Gastrocnemius medialis (tissue), 4 donors: ENCODE measurements at regions of chr1 and their contacts with region 1.

Region 1: GRCh38 chr1:160046494-160047110 is 14.8 kb upstream of the PIGM start:
- DNase-seq: peak in 1 of 2 donors; percentile 31
- ATAC-seq: peak; percentile 67 to 83
- H3K4me3 ChIP-seq: no peak overlapping the region
- H3K27ac ChIP-seq: no peak overlapping the region
- H3K4me1 ChIP-seq: peaks cover 0 to 6% of the 10 kb centered on the region in 2 donors
- H3K27me3 ChIP-seq: no peaks in the 10 kb centered on the region
- CTCF ChIP-seq: peak; percentile 24 to 65 (median 54)
- POLR2A ChIP-seq: no peak

Region 2: GRCh38 chr1:159686599-159687299 is 359.9 kb before region 1 on chr1:
- in situ Hi-C with region 1: no loop called
- intact Hi-C with region 1: no loop called
- DNase-seq: no peak
- ATAC-seq: no peak
- H3K4me3 ChIP-seq: no peak overlapping the region
- H3K27ac ChIP-seq: no peak overlapping the region
- H3K4me1 ChIP-seq: no peaks in the 10 kb centered on the region
- H3K27me3 ChIP-seq: no peaks in the 10 kb centered on the region
- CTCF ChIP-seq: no peak
- POLR2A ChIP-seq: no peak

Region 3: GRCh38 chr1:160031365-160032164 is 15.0 kb before region 1 on chr1 and contains the start of gene PIGM:
- in situ Hi-C with region 1: no loop called
- intact Hi-C with region 1: loop called (anchors 1 kb)
- DNase-seq: peak; percentile 90 to 94
- ATAC-seq: peak; percentile 97
- H3K4me3 ChIP-seq: peak within 1 kb of the TSS; percentile 80 to 94 (median 88)
- H3K27ac ChIP-seq: peak within 1 kb of the TSS; percentile 74 to 88 (median 81)
- H3K4me1 ChIP-seq: peaks cover 18 to 23% of the 10 kb centered on the region in 2 donors
- H3K27me3 ChIP-seq: no peaks in the 10 kb centered on the region
- CTCF ChIP-seq: no peak
- POLR2A ChIP-seq: peak in 1 of 2 donors; percentile 57
- total RNA-seq, gene PIGM: 0.55 to 0.75 (median 0.72) TPM

Region 4: GRCh38 chr1:160078512-160079195 is 32.1 kb after region 1 on chr1:
- in situ Hi-C with region 1: no loop called
- intact Hi-C with region 1: loop called (anchors 2 kb)
- DNase-seq: peak in 1 of 2 donors; percentile 64
- ATAC-seq: peak; percentile 63 to 92
- H3K4me3 ChIP-seq: no peak overlapping the region
- H3K27ac ChIP-seq: peak overlapping the region in 2 of 4 donors; percentile 29 to 62
- H3K4me1 ChIP-seq: peaks cover 0 to 13% of the 10 kb centered on the region in 2 donors
- H3K27me3 ChIP-seq: peaks cover 0 to 16% (median 3%) of the 10 kb centered on the region in 3 donors
- CTCF ChIP-seq: peak; percentile 41 to 71 (median 54)
- POLR2A ChIP-seq: no peak

Region 5: GRCh38 chr1:160108888-160109662 is 62.5 kb after region 1 on chr1:
- in situ Hi-C with region 1: no loop called
- intact Hi-C with region 1: no loop called
- DNase-seq: no peak
- ATAC-seq: peak in 1 of 2 donors; percentile 32
- H3K4me3 ChIP-seq: no peak overlapping the region
- H3K27ac ChIP-seq: no peak overlapping the region
- H3K4me1 ChIP-seq: peaks cover 29 to 32% of the 10 kb centered on the region in 2 donors
- H3K27me3 ChIP-seq: no peaks in the 10 kb centered on the region
- CTCF ChIP-seq: peak in 4 of 5 experiments; percentile 28 to 61 (median 30)
- POLR2A ChIP-seq: no peak